Activated T-helper 2 cell treated with anti-CD3 and anti-CD28 coated beads, Interferon-gamma antibody, Interleukin-2, Interleukin-4, amounts not matched to agents 10 μg/mL and 5 μg/mL and 100 μg/mL, durations not matched to agents 14 hours and 24 hours and 36 hours (primary cell): ENCODE measurements at regions of chr10 and their contacts with region 1.

Region 1: GRCh38 chr10:59865101-59865500 is 41.3 kb downstream of the CCDC6 start:
- DNase-seq: no peak
- H3K4me3 Mint-ChIP-seq: no peak overlapping the region
- H3K27ac Mint-ChIP-seq: no peak overlapping the region
- H3K4me1 Mint-ChIP-seq: peaks cover 41% of the 10 kb centered on the region
- H3K27me3 Mint-ChIP-seq: no peaks in the 10 kb centered on the region

Region 2: DNA sequence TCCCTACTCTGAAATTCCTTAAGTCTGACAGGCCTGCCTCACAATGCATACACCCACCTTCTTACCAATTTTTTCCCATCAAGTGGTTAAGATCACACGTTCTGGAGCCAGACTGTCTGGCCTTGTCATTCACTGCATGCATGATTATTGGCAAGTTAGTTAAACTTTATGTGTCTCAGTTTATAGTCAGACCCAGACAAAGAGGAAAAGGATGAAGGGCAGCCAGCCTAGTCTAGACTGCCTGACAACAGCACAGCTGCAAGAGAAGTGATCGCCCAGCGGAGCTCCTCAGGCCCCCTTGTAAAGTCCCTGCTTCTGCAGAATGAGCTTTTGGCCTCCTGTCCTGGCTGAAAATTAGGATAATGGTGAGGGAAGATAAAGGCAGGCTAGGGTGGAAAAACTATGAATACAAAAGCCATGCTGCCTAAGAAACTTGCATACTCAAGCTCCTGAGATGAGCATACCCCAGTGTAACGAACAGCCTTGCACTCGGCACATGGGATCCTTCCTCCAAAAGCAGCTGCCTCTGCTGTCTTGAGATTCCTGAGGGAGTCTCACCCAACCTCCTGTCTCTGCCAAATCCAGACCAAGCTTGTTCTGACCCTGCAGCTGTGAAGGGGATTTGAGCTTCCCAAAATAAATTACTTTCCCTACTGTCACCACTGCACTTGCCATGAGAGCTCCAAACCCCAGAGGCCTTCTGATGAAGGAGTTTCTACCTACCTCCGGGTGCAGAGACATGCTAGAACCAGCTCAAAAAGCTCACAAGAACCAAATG is 85.2 kb before region 1 on chr10:
- intact Hi-C with region 1: no loop called
- DNase-seq: no peak
- H3K4me3 Mint-ChIP-seq: no peak overlapping the region
- H3K27ac Mint-ChIP-seq: no peak overlapping the region
- H3K4me1 Mint-ChIP-seq: no peaks in the 10 kb centered on the region
- H3K27me3 Mint-ChIP-seq: no peaks in the 10 kb centered on the region

Region 3: GRCh38 chr10:60003651-60004523 is 138.8 kb after region 1 on chr10:
- intact Hi-C with region 1: no loop called
- DNase-seq: no peak
- H3K4me3 Mint-ChIP-seq: no peak overlapping the region
- H3K27ac Mint-ChIP-seq: no peak overlapping the region
- H3K4me1 Mint-ChIP-seq: peaks cover 14% of the 10 kb centered on the region
- H3K27me3 Mint-ChIP-seq: peaks cover 2% of the 10 kb centered on the region

Region 4: DNA sequence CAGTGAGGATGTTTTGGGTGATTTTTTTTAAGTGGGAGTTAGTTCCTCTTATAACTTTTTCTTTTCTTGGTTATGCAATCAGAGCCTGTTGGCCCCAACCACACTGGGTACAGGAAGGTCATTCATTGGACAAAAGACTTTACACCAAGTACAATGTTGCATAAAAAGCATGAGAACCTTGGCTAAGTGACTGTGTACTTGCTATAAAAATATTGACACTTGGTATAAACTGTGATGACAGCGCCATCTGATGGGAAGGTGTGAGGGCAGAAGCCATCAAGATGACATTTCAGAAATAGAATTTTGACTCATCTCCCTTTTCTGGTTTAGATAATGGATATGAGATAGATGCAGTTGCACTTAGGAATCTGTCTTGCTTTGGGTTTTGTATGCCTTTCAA is 167.6 kb after region 1 on chr10:
- intact Hi-C with region 1: loop called (anchors 5 kb)
- DNase-seq: peak; percentile 20
- H3K4me3 Mint-ChIP-seq: no peak overlapping the region
- H3K27ac Mint-ChIP-seq: no peak overlapping the region
- H3K4me1 Mint-ChIP-seq: peaks cover 14% of the 10 kb centered on the region
- H3K27me3 Mint-ChIP-seq: no peaks in the 10 kb centered on the region